GM18951 (cell line): ENCODE measurements at regions of chr2 and their contacts with region 1.

Region 1: DNA sequence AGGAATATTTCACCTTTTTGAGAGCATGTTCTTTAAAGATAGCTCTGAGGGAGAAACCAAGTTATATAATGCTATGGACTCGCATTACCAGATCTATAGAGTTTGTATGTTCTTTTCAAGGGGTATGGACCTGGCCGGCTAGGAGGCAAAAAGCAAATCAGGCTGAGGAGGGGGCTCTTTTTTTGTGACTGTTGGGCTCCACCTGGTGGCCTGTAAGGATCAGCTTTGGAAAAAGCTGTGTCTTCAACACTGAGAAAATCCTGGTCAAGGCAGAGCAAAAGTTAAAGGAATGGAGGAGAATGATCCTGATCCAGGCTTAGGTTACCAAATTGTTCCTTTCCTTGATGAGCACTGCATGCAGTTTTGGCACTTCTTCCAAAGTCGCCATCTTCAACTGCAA is 180.5 kb downstream of the DIS3L2 start:
- POLR2A ChIP-seq: no peak

Region 2: DNA sequence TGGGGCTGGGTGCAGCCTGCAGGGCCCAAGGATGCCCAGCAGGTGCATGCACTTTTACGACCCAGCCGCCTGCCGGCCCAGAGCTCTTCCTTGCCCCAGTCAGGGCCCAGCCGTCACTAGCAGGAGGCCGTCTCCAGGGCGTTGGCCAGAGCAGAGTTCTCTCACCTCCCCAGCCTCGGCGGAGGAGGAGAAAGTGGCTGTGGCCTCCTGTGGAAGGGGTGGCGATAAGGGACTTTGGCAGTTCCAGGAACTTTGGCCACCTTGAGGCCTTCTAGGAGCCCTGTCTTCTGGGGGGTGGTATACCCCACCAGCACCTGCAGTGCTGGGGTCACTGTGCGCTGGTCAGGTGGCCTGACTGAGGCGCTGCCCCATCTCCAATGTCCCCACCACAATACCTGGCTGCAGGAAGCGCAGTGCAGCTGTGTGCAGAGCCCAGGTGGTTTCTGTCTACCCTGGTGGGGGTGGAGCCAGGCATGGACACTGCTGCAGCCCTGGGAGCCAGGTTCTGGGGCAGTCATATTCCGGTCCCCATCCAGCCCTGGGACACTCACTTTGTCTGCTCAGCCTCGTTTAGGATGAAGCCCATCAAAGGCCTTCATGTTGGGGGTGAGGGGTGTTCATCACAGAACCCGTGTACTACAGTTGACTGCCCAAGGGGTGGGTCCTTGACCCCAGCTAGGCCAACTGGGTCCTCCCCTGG is 237.7 kb before region 1 on chr2:
- in situ Hi-C with region 1: no loop called
- POLR2A ChIP-seq: no peak

Region 3: GRCh38 chr2:231929961-231930592 is 212.0 kb before region 1 on chr2:
- in situ Hi-C with region 1: loop called (anchors 10 kb)
- POLR2A ChIP-seq: no peak